HepG2 (cell line): ENCODE measurements at regions of chr10 and their contacts with region 1.

Region 1: GRCh38 chr10:129258283-129258923 is 208.6 kb upstream of the MGMT start:
- DNase-seq: no peak
- ATAC-seq: no peak
- H3K4me3 ChIP-seq: no peak overlapping the region
- H3K27ac ChIP-seq: no peak overlapping the region
- H3K4me1 ChIP-seq: no peaks in the 10 kb centered on the region
- H3K27me3 ChIP-seq: peaks cover 0 to under 1% of the 10 kb centered on the region in 2 experiments; a peak in 2 of 5 replicates
- CTCF ChIP-seq: no peak
- EP300 ChIP-seq: no peak
- POLR2A ChIP-seq: no peak
- RAD21 ChIP-seq: no peak

Region 2: GRCh38 chr10:129079705-129080104 is 178.7 kb before region 1 on chr10:
- CTCF ChIA-PET with region 1: no interaction called
- POLR2A ChIA-PET with region 1: no interaction called
- in situ Hi-C with region 1: no loop called
- intact Hi-C with region 1: loop called (anchors 10 kb)
- DNase-seq: no peak
- ATAC-seq: no peak
- H3K4me3 ChIP-seq: no peak overlapping the region
- H3K27ac ChIP-seq: no peak overlapping the region
- H3K4me1 ChIP-seq: no peaks in the 10 kb centered on the region
- H3K27me3 ChIP-seq: no peaks in the 10 kb centered on the region
- CTCF ChIP-seq: no peak
- EP300 ChIP-seq: no peak
- POLR2A ChIP-seq: no peak
- RAD21 ChIP-seq: no peak